GM12878 (cell line): ENCODE measurements at regions of chr19 and their contacts with region 1.

Region 1: DNA sequence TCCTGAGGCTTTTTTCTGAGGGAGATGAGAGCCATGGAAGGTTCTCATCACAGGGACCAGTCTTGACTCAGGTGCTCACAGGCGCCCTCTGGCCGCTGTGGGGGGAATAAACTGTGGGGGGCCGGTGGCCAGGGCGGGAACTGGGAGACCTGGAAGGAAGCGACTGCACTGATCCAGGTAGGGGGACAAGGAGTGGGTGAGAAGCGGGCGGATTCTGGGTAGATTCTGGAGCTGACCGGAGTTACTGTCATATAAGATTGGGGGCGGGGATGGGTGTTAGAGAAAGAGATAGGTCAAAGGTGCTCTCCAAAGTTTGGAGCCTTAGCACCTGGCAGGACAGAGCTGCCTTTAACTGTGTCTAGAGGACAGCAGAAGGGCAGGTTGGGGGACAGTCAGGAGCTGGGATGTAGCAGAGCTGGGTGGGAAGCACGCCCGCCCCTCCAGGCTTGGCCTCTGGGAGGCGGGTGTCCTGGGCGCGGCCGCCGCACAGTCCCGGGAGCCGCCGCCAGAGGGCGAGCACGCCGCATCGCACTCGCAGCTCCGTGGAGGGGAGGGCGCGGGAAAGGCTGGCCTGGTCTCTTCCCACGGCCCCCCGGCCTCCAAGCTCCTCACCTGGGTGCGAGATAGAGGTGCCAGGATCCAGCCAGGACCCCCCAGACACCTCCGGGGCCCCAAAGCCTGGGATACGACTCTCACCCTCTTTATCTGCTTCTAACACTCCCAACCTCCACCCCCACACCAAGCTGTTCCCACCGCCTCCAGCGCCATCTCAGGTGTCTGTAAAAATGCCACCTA is 4.2 kb upstream of the DAND5 start:
- DNase-seq: peak; percentile 39
- ATAC-seq: peak; percentile 99
- H3K4me3 ChIP-seq: peak overlapping the region; percentile 64; the same call in 1 of the 2 replicates
- H3K27ac ChIP-seq: peak overlapping the region; percentile 2; the same call in 1 of the 2 replicates
- H3K4me1 ChIP-seq: 0 out of 2 replicates have a peak, but pooled peaks cover 3% of the 10 kb centered on the region
- H3K27me3 ChIP-seq: no peaks in the 10 kb centered on the region
- CTCF ChIP-seq: peak; percentile 81 to 99 (median 97)
- EP300 ChIP-seq: no peak
- POLR2A ChIP-seq: peak; percentile 29; the same call in 1 of the 2 replicates
- RAD21 ChIP-seq: peak; percentile 68

Region 2: GRCh38 chr19:12881172-12881808 is 83.9 kb before region 1 on chr19 and contains the start of gene DNASE2:
- CTCF ChIA-PET with region 1: interaction called, 182 read pairs
- POLR2A ChIA-PET with region 1: interaction called, 11 read pairs
- RAD21 ChIA-PET with region 1: interaction called, 31 read pairs
- SMC1A ChIA-PET with region 1: interaction called, 29 read pairs
- in situ Hi-C with region 1: no loop called
- intact Hi-C with region 1: loop called (anchors 1 kb)
- DNase-seq: peak; percentile 85
- ATAC-seq: peak; percentile 88
- H3K4me3 ChIP-seq: peak within 1 kb of the TSS; percentile 90
- H3K27ac ChIP-seq: peak within 1 kb of the TSS; percentile 82
- H3K4me1 ChIP-seq: peaks cover 16% of the 10 kb centered on the region
- H3K27me3 ChIP-seq: no peaks in the 10 kb centered on the region; a peak in 1 of 4 replicates
- CTCF ChIP-seq: no peak
- EP300 ChIP-seq: peak in 1 of 2 experiments; percentile 59; a peak in 1 of 4 replicates
- POLR2A ChIP-seq: peak; percentile 88
- RAD21 ChIP-seq: no peak
- polyA plus RNA-seq, gene DNASE2: 4.9 to 7.8 TPM

Region 3: GRCh38 chr19:12913011-12913561 is 52.1 kb before region 1 on chr19:
- CTCF ChIA-PET with region 1: interaction called, 11 read pairs
- POLR2A ChIA-PET with region 1: interaction called, 6 read pairs
- RAD21 ChIA-PET with region 1: no interaction called
- SMC1A ChIA-PET with region 1: interaction called, 3 read pairs
- in situ Hi-C with region 1: no loop called
- intact Hi-C with region 1: no loop called
- DNase-seq: no peak
- ATAC-seq: no peak
- H3K4me3 ChIP-seq: no peak overlapping the region
- H3K27ac ChIP-seq: no peak overlapping the region
- H3K4me1 ChIP-seq: peaks cover 7% of the 10 kb centered on the region
- H3K27me3 ChIP-seq: no peaks in the 10 kb centered on the region
- CTCF ChIP-seq: no peak
- EP300 ChIP-seq: no peak
- POLR2A ChIP-seq: no peak
- RAD21 ChIP-seq: no peak

Region 4: GRCh38 chr19:12938234-12939025 is 26.8 kb before region 1 on chr19 and contains the start of gene CALR:
- CTCF ChIA-PET with region 1: interaction called, 18 read pairs
- POLR2A ChIA-PET with region 1: interaction called, 3 read pairs
- RAD21 ChIA-PET with region 1: interaction called, 5 read pairs
- SMC1A ChIA-PET with region 1: interaction called, 8 read pairs
- in situ Hi-C with region 1: no loop called
- intact Hi-C with region 1: no loop called
- DNase-seq: peak; percentile 97
- ATAC-seq: peak; percentile 92
- H3K4me3 ChIP-seq: peak within 1 kb of the TSS; percentile 90
- H3K27ac ChIP-seq: peak within 1 kb of the TSS; percentile 89
- H3K4me1 ChIP-seq: peaks cover 49% of the 10 kb centered on the region
- H3K27me3 ChIP-seq: no peaks in the 10 kb centered on the region
- CTCF ChIP-seq: peak in 1 of 3 experiments; percentile 10; a peak in 1 of 6 replicates
- EP300 ChIP-seq: peak in 1 of 2 experiments; percentile 8; a peak in 1 of 4 replicates
- POLR2A ChIP-seq: peak; percentile 99
- RAD21 ChIP-seq: no peak
- polyA plus RNA-seq, gene CALR: 202 to 216 TPM

Region 5: GRCh38 chr19:13033819-13034611 is 68.8 kb after region 1 on chr19:
- CTCF ChIA-PET with region 1: interaction called, 15 read pairs
- POLR2A ChIA-PET with region 1: no interaction called
- RAD21 ChIA-PET with region 1: interaction called, 6 read pairs
- SMC1A ChIA-PET with region 1: interaction called, 4 read pairs
- in situ Hi-C with region 1: no loop called
- intact Hi-C with region 1: no loop called
- DNase-seq: no peak
- ATAC-seq: peak; percentile 95
- H3K4me3 ChIP-seq: no peak overlapping the region
- H3K27ac ChIP-seq: no peak overlapping the region
- H3K4me1 ChIP-seq: no peaks in the 10 kb centered on the region
- H3K27me3 ChIP-seq: peaks cover 0 to 2% of the 10 kb centered on the region in 2 experiments; a peak in 2 of 4 replicates
- CTCF ChIP-seq: peak; percentile 71 to 93 (median 90)
- EP300 ChIP-seq: no peak
- POLR2A ChIP-seq: no peak
- RAD21 ChIP-seq: peak; percentile 65

Region 6: DNA sequence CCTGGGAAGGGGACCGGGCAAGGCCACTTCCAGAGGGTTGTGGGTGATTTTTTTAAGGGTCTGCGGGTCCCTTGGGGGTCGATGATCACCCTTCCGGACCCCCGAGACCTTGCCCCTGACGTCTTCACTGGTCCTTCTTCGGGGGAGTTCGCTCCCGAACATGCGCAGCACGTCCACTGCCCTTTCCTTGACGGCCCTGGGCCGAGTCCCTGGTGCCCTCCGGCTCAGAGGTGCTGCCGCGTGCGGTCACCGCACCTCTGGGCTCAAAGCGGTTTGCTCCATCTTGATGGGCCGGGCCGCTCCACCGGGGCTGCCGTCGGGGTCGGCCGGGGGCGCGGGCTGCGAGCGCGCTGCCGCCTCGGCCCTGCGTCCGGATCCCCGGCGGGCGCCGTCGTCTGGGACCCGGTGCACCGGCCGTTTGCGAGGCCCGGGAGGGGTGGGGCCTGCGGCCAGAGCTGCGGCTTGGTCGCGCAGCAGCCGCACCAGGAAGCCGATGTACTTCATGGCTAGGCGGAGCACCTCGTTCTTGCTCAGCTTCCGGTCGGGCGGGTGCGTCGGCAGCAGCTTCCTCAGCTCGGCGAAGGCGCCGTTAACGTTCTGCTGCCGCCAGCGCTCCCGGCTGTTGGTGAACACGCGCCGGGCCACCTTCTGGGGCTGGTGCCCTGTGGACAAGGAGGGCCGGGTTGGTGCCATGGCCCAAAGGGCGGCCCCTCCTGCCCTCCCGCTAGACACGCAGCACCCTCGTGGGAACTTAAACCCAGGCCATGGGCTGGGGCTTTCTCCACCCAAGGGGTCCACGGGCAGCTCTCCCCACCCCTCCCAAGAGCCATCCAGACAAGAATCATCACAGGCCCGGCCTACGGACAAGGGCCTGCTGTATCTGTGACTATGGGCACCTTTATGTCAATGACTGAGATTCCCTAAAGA is 134.1 kb after region 1 on chr19:
- CTCF ChIA-PET with region 1: interaction called, 63 read pairs
- POLR2A ChIA-PET with region 1: no interaction called
- RAD21 ChIA-PET with region 1: interaction called, 18 read pairs
- SMC1A ChIA-PET with region 1: interaction called, 20 read pairs
- in situ Hi-C with region 1: no loop called
- intact Hi-C with region 1: no loop called
- DNase-seq: no peak
- ATAC-seq: peak; percentile 18
- H3K4me3 ChIP-seq: no peak overlapping the region
- H3K27ac ChIP-seq: peak overlapping the region; percentile 48; the same call in 1 of the 2 replicates
- H3K4me1 ChIP-seq: peaks cover 50% of the 10 kb centered on the region
- H3K27me3 ChIP-seq: peaks cover 2 to 7% of the 10 kb centered on the region in 2 experiments
- CTCF ChIP-seq: no peak
- EP300 ChIP-seq: 0 out of 4 replicates have a peak, but pooled peaks of 1 of the 2 experiments have one; percentile 16
- POLR2A ChIP-seq: peak; percentile 53; the same call in 1 of the 2 replicates
- RAD21 ChIP-seq: no peak